ENCODE measurements at regions of chr19 and their contacts with region 1.

Region 1: DNA sequence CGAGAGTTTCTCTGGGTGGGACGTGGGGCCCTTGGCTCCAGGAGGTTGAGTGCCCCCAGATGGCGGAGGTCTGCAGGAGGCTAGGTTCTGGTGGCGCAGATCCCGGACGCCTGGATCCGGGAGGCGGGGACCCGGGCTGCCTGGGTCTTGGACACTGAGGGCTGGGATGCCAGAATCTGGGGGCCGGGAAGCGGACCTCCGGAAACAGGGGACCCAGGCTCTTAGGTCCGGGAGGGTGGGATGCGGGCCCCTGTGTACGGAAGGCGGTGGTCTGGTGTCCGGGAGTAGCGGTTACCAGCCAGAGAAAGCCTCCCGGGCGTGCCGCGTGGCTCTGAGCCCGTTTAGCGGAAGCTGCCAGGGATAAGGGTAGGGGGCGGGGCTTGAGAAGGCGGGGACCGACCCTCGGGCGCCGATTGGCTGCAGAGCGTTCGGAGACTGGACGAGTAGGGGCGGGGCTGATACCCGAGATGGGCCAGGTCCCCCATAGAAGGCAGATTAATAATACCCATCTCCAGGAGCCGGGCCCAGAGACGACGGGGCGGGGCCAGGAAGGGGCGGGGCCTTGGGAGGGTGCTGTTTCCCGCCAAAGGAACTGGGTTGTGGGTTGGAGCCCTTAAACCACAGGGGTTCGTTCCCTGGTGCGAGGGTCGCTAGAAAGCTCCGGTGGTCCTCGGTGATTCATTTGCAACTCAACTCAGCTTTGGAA is at the start of gene SLC1A5:
- DNase-seq: peak; percentile 99
- H3K4me3 Mint-ChIP-seq: peak within 1 kb of the TSS; percentile 95
- H3K27ac Mint-ChIP-seq: peak within 1 kb of the TSS; percentile 99
- H3K4me1 Mint-ChIP-seq: peaks cover 38% of the 10 kb centered on the region
- H3K27me3 Mint-ChIP-seq: no peaks in the 10 kb centered on the region
- total RNA-seq, gene SLC1A5: 202 to 205 TPM

Region 2: GRCh38 chr19:46717034-46717723 is 71.2 kb before region 1 on chr19 and contains the start of gene PRKD2:
- CTCF ChIA-PET with region 1: interaction called, 5 read pairs
- POLR2A ChIA-PET with region 1: interaction called, 9 read pairs
- intact Hi-C with region 1: loop called (anchors 2 kb)
- DNase-seq: peak; percentile 94
- H3K4me3 Mint-ChIP-seq: peak within 1 kb of the TSS; percentile 93
- H3K27ac Mint-ChIP-seq: peak within 1 kb of the TSS; percentile 95
- H3K4me1 Mint-ChIP-seq: peaks cover 38% of the 10 kb centered on the region
- H3K27me3 Mint-ChIP-seq: no peaks in the 10 kb centered on the region
- total RNA-seq, gene PRKD2: 78.8 to 84.4 TPM

Region 3: DNA sequence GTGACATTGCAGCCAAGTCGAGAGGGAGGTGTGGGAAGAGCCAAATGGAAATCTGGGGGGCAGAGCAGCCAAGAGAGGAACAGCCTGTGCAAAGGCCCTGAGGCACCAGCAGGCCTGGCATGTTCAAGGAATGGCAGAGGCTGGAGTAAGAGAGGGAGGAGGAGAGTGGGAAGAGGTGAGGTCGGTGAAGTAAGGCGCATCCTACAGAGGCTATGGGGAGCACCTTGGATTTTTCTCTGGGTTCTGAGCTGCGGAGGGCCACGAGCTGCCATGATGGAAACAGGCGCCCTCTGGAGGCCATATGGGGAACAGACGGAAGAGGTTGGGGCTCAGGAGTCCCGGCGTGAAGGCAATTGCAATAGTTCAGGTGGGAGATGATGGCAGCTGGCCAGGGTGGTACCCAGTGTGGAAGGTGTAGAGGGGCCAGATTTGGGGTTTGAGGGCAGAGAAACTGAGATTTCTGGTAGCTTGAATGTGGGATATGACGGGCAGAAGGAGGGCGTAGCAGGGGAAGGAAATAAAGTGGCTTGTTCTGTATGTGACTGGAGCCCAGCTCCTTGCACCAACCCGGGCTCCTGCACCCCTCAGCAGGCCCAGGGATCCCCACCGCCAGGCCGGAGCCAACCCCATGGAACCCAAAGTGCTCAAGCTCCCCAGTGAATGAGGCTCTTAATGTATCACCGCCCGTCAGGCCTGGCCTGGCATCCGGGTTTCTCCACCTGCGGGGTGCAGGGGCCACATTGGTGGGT is 21.7 kb before region 1 on chr19:
- CTCF ChIA-PET with region 1: interaction called, 21 read pairs
- POLR2A ChIA-PET with region 1: interaction called, 3 read pairs
- intact Hi-C with region 1: no loop called
- DNase-seq: peak; percentile 76
- H3K4me3 Mint-ChIP-seq: no peak overlapping the region
- H3K27ac Mint-ChIP-seq: no peak overlapping the region
- H3K4me1 Mint-ChIP-seq: peaks cover 2% of the 10 kb centered on the region
- H3K27me3 Mint-ChIP-seq: no peaks in the 10 kb centered on the region

Region 4: GRCh38 chr19:46821498-46822409 is 33.3 kb after region 1 on chr19:
- CTCF ChIA-PET with region 1: interaction called, 4 read pairs
- POLR2A ChIA-PET with region 1: interaction called, 18 read pairs
- intact Hi-C with region 1: loop called (anchors 1 kb)
- DNase-seq: peak; percentile 81
- H3K4me3 Mint-ChIP-seq: peak overlapping the region; percentile 26
- H3K27ac Mint-ChIP-seq: peak overlapping the region; percentile 65
- H3K4me1 Mint-ChIP-seq: peaks cover 33% of the 10 kb centered on the region
- H3K27me3 Mint-ChIP-seq: no peaks in the 10 kb centered on the region

Region 5: GRCh38 chr19:46850228-46851203 is 62.1 kb after region 1 on chr19 and contains the start of gene AP2S1:
- CTCF ChIA-PET with region 1: no interaction called
- POLR2A ChIA-PET with region 1: no interaction called
- intact Hi-C with region 1: loop called (anchors 1 kb)
- DNase-seq: peak; percentile 96
- H3K4me3 Mint-ChIP-seq: peak within 1 kb of the TSS; percentile 95
- H3K27ac Mint-ChIP-seq: peak within 1 kb of the TSS; percentile 80
- H3K4me1 Mint-ChIP-seq: peaks cover 19% of the 10 kb centered on the region
- H3K27me3 Mint-ChIP-seq: no peaks in the 10 kb centered on the region
- total RNA-seq, gene AP2S1: 108 to 117 TPM

Region 6: GRCh38 chr19:47047763-47048405 is 259.5 kb after region 1 on chr19:
- CTCF ChIA-PET with region 1: no interaction called
- POLR2A ChIA-PET with region 1: no interaction called
- intact Hi-C with region 1: loop called (anchors 1 kb)
- DNase-seq: peak; percentile 91
- H3K4me3 Mint-ChIP-seq: peak overlapping the region; percentile 99
- H3K27ac Mint-ChIP-seq: peak overlapping the region; percentile 87
- H3K4me1 Mint-ChIP-seq: peaks cover 12% of the 10 kb centered on the region
- H3K27me3 Mint-ChIP-seq: peaks cover 1% of the 10 kb centered on the region

Region 7: GRCh38 chr19:48255376-48256303 is 1467.2 kb after region 1 on chr19 and contains the start of gene CARD8:
- CTCF ChIA-PET with region 1: no interaction called
- POLR2A ChIA-PET with region 1: no interaction called
- intact Hi-C with region 1: loop called (anchors 5 kb)
- DNase-seq: peak; percentile 86
- H3K4me3 Mint-ChIP-seq: peak within 1 kb of the TSS; percentile 91
- H3K27ac Mint-ChIP-seq: peak within 1 kb of the TSS; percentile 98
- H3K4me1 Mint-ChIP-seq: peaks cover 62% of the 10 kb centered on the region
- H3K27me3 Mint-ChIP-seq: no peaks in the 10 kb centered on the region
- total RNA-seq, gene CARD8: 152 TPM

Measured in activated CD4-positive, alpha-beta memory T cell treated with anti-CD3 and anti-CD28 coated beads for 36 hours (primary cell).